Activated naive CD4-positive, alpha-beta T cell treated with anti-CD3 and anti-CD28 coated beads for 36 hours (primary cell): ENCODE measurements at regions of chr12 and their contacts with region 1.

Region 1: GRCh38 chr12:53577941-53578352 is 48.2 kb downstream of the ATF7 start:
- DNase-seq: no peak
- H3K4me3 Mint-ChIP-seq: no peak overlapping the region
- H3K27ac Mint-ChIP-seq: no peak overlapping the region
- H3K4me1 Mint-ChIP-seq: peaks cover 37% of the 10 kb centered on the region
- H3K27me3 Mint-ChIP-seq: no peaks in the 10 kb centered on the region

Region 2: GRCh38 chr12:53613821-53614220 is 35.9 kb after region 1 on chr12:
- CTCF ChIA-PET with region 1: interaction called, 3 read pairs
- intact Hi-C with region 1: loop called (anchors 1 kb)
- DNase-seq: no peak
- H3K4me3 Mint-ChIP-seq: no peak overlapping the region
- H3K27ac Mint-ChIP-seq: no peak overlapping the region
- H3K4me1 Mint-ChIP-seq: peaks cover 34% of the 10 kb centered on the region
- H3K27me3 Mint-ChIP-seq: no peaks in the 10 kb centered on the region